Stomach (tissue), 19 donors: ENCODE measurements at regions of chr1 and their contacts with region 1.

Region 1: GRCh38 chr1:167442124-167442848 is 76.0 kb downstream of the CD247 start:
- DNase-seq: peak; percentile 92 to 96
- H3K4me3 ChIP-seq: no peak overlapping the region
- H3K27ac ChIP-seq: peak overlapping the region in 1 of 5 donors; percentile 7
- H3K4me1 ChIP-seq: peaks cover 9 to 18% (median 12%) of the 10 kb centered on the region in 4 donors
- H3K27me3 ChIP-seq: peaks cover 0 to 36% (median 6%) of the 10 kb centered on the region in 3 donors
- CTCF ChIP-seq: peak in 5 of 7 experiments; percentile 63 to 82 (median 76)
- EP300 ChIP-seq: no peak
- POLR2A ChIP-seq: no peak

Region 2: DNA sequence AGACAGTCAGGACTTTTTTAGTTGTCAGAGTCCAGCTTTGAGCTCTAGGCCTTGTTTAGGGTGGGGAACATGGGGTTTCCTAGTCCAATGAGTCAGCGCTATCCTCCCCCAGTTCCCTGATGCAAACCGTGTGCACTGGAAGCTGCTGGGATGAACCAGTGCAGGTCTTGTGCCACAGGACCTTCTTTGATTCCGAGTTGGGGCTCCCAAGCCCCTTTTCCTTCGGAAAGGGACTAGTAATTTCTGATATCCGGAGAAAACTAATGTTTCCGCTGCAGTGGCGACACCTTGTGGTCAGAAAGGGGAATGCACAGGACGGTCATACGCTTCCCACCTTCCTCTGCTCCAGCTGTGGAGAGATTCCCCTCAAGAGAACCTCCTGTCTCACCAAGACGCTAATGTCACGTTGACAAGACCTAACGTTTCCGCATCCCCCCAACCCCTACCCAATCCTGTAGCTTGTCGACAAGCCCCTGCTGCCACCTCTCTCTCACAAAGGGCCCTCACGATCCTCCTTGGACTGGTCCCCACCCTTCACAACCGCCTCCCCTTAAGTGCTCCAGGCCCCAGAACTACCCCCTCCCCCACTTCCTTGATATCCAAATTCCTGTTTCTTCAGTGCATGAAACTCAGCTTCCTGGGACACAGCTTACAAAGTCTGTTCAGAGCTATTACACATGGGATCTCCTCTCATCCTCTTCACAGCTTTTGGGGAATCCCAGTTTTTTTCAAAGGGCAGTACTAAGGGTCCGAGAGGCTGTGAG is 383.1 kb before region 1 on chr1:
- intact Hi-C with region 1: loop called (anchors 5 kb)
- DNase-seq: peak; percentile 78 to 86
- H3K4me3 ChIP-seq: no peak overlapping the region
- H3K27ac ChIP-seq: no peak overlapping the region
- H3K4me1 ChIP-seq: peaks cover 0 to 8% (median 6%) of the 10 kb centered on the region in 4 donors
- H3K27me3 ChIP-seq: peaks cover 0 to 29% (median 3%) of the 10 kb centered on the region in 3 donors
- CTCF ChIP-seq: peak in 5 of 7 experiments; percentile 82 to 99 (median 94)
- EP300 ChIP-seq: no peak
- POLR2A ChIP-seq: no peak

Region 3: GRCh38 chr1:167076136-167076710 is 366.1 kb before region 1 on chr1:
- intact Hi-C with region 1: loop called (anchors 5 kb)
- DNase-seq: no peak
- H3K4me3 ChIP-seq: no peak overlapping the region
- H3K27ac ChIP-seq: no peak overlapping the region
- H3K4me1 ChIP-seq: no peaks in the 10 kb centered on the region
- H3K27me3 ChIP-seq: no peaks in the 10 kb centered on the region
- CTCF ChIP-seq: no peak
- EP300 ChIP-seq: no peak
- POLR2A ChIP-seq: no peak

Region 4: GRCh38 chr1:167263819-167264464 is 178.3 kb before region 1 on chr1:
- intact Hi-C with region 1: loop called (anchors 10 kb)
- DNase-seq: peak in 1 of 2 donors; percentile 20
- H3K4me3 ChIP-seq: no peak overlapping the region
- H3K27ac ChIP-seq: no peak overlapping the region
- H3K4me1 ChIP-seq: peaks cover 0 to 66% (median 32%) of the 10 kb centered on the region in 4 donors
- H3K27me3 ChIP-seq: no peaks in the 10 kb centered on the region
- CTCF ChIP-seq: no peak
- EP300 ChIP-seq: no peak
- POLR2A ChIP-seq: no peak

Region 5: DNA sequence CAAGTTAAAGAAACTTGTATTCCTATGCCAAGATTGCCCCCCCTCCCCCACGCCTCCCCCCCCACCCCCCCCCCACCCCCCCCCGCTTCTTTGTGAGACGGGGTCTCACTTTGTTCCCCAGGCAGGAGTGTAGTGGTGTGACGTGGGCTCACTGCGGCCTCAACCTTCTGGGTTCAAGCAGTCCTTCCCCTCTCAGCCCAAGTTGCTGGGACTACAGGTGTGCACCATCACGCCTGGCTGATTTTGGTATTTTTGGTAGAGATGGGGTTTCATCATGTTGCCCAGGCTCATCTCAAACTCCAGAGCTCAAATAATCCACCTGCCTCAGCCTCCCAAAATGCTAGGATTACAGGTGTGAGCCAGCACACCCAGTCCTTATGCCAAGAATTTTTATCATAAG is 85.0 kb before region 1 on chr1:
- intact Hi-C with region 1: no loop called
- DNase-seq: no peak
- H3K4me3 ChIP-seq: no peak overlapping the region
- H3K27ac ChIP-seq: no peak overlapping the region
- H3K4me1 ChIP-seq: no peaks in the 10 kb centered on the region
- H3K27me3 ChIP-seq: no peaks in the 10 kb centered on the region
- CTCF ChIP-seq: no peak
- EP300 ChIP-seq: no peak
- POLR2A ChIP-seq: no peak

Region 6: DNA sequence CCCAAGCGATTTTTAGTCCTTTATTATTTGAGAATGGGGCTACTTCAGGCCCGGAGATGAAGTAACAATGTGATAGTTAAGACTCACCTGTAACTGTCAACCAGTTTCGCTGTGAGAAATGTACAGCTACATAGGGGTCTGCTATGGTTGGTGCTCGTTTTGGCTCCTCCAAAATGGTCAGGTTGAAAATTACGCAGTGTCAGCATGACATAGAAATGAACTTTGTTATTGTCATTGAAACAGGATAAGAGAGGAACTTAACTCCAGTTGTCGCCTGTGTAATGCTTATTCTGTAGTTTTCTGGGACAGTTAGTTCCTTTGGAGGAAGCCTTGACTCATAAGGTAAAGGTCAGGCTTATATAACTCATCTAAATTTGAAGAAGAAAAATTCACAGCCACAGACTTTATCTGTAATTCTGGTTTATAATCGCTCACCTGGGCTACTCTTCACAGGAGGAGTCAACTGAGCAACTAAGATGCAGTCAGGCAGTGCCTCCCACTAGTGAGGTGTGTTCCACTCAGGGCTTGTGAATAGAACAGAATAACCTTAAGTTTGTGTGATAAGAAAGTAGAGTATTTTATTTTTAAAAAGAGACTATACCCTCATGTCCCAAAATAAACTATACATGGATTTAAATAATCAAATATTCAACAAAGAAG is 54.9 kb before region 1 on chr1:
- intact Hi-C with region 1: no loop called
- DNase-seq: no peak
- H3K4me3 ChIP-seq: no peak overlapping the region
- H3K27ac ChIP-seq: no peak overlapping the region
- H3K4me1 ChIP-seq: no peaks in the 10 kb centered on the region
- H3K27me3 ChIP-seq: no peaks in the 10 kb centered on the region
- CTCF ChIP-seq: no peak
- EP300 ChIP-seq: no peak
- POLR2A ChIP-seq: no peak

Region 7: GRCh38 chr1:167533851-167534300 is 91.6 kb after region 1 on chr1:
- intact Hi-C with region 1: loop called (anchors 10 kb)
- DNase-seq: peak; percentile 76 to 90
- H3K4me3 ChIP-seq: no peak overlapping the region
- H3K27ac ChIP-seq: no peak overlapping the region
- H3K4me1 ChIP-seq: peaks cover 0 to 13% (median 6%) of the 10 kb centered on the region in 4 donors
- H3K27me3 ChIP-seq: no peaks in the 10 kb centered on the region
- CTCF ChIP-seq: peak in 5 of 7 experiments; percentile 45 to 88 (median 82)
- EP300 ChIP-seq: no peak
- POLR2A ChIP-seq: no peak

Region 8: GRCh38 chr1:167627865-167628641 is 185.8 kb after region 1 on chr1:
- intact Hi-C with region 1: no loop called
- DNase-seq: peak; percentile 60 to 78
- H3K4me3 ChIP-seq: no peak overlapping the region
- H3K27ac ChIP-seq: peak overlapping the region in 4 of 5 donors; percentile 85 to 94 (median 90)
- H3K4me1 ChIP-seq: peaks cover 25 to 43% (median 36%) of the 10 kb centered on the region in 4 donors
- H3K27me3 ChIP-seq: peaks cover 0 to 18% (median 4%) of the 10 kb centered on the region in 3 donors
- CTCF ChIP-seq: no peak
- EP300 ChIP-seq: no peak
- POLR2A ChIP-seq: no peak